ENCODE measurements at regions of chr10 and their contacts with region 1.

Region 1: GRCh38 chr10:71771821-71772617 is 1.3 kb downstream of the VSIR start:
- DNase-seq: no peak
- ATAC-seq: no peak
- H3K4me3 Mint-ChIP-seq: 0 out of 2 replicates have a peak overlapping the region, but pooled peaks have one; percentile 66
- H3K27ac Mint-ChIP-seq: no peak overlapping the region
- H3K4me1 Mint-ChIP-seq: peaks cover 6% of the 10 kb centered on the region
- H3K27me3 Mint-ChIP-seq: peaks cover 29% of the 10 kb centered on the region
- CTCF ChIP-seq: no peak

Region 2: DNA sequence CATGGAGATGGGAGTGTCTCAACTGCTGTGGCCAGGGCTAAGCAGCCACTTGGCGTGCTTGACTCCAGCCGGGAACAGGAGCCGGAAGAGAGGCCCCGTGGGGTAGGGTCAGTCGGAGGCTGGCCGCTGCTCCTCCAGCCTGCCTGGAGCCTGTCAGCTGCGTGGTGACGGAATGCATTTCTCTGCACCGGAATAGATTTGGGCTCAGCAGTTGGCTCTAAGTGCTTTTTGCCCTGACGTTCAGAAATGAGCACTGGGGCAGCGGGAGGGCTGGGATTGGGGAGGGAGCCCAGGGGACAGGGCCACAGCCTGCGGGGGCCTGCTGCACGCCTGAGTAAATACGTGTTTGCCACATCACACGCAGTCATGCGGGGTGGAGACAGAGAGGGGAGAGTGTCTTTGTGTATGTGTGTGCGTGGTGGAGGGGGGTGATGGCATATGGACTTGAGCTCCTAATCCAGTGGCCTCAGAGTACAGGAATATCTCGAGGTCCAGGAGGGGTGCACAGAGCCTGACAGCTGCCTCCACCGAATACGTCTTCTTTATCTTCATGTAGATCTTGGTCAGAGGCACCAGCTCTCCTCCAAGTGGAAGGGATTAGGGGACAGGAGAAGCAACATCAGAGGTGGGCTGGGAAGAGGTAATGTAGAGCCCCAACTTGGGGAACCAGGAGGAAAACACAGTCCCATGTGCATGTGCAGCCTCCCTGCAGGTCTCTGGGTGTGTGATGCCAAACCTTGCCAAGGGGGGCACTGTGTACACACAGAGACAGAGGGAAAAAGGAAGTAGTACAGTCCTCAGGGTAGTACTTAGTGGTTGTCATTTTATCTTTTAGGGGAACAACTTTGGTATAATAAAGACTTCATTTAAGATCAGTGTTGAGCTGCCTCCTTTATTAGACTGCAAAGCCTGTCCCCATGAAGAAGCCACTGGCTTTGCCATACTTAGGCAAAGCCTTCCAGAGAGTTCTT is 223.9 kb before region 1 on chr10:
- CTCF ChIA-PET with region 1: no interaction called
- POLR2A ChIA-PET with region 1: no interaction called
- DNase-seq: peak; percentile 52
- ATAC-seq: peak; percentile 59
- H3K4me3 Mint-ChIP-seq: no peak overlapping the region
- H3K27ac Mint-ChIP-seq: no peak overlapping the region
- H3K4me1 Mint-ChIP-seq: peaks cover 60% of the 10 kb centered on the region
- H3K27me3 Mint-ChIP-seq: no peaks in the 10 kb centered on the region
- CTCF ChIP-seq: no peak; the same call in 1 of the 2 replicates

Region 3: GRCh38 chr10:71666639-71667386 is 105.2 kb before region 1 on chr10:
- CTCF ChIA-PET with region 1: no interaction called
- POLR2A ChIA-PET with region 1: no interaction called
- DNase-seq: no peak
- ATAC-seq: no peak
- H3K4me3 Mint-ChIP-seq: no peak overlapping the region
- H3K27ac Mint-ChIP-seq: no peak overlapping the region
- H3K4me1 Mint-ChIP-seq: peaks cover 37% of the 10 kb centered on the region
- H3K27me3 Mint-ChIP-seq: peaks cover 14% of the 10 kb centered on the region; the same call in 1 of the 2 replicates
- CTCF ChIP-seq: no peak

Region 4: DNA sequence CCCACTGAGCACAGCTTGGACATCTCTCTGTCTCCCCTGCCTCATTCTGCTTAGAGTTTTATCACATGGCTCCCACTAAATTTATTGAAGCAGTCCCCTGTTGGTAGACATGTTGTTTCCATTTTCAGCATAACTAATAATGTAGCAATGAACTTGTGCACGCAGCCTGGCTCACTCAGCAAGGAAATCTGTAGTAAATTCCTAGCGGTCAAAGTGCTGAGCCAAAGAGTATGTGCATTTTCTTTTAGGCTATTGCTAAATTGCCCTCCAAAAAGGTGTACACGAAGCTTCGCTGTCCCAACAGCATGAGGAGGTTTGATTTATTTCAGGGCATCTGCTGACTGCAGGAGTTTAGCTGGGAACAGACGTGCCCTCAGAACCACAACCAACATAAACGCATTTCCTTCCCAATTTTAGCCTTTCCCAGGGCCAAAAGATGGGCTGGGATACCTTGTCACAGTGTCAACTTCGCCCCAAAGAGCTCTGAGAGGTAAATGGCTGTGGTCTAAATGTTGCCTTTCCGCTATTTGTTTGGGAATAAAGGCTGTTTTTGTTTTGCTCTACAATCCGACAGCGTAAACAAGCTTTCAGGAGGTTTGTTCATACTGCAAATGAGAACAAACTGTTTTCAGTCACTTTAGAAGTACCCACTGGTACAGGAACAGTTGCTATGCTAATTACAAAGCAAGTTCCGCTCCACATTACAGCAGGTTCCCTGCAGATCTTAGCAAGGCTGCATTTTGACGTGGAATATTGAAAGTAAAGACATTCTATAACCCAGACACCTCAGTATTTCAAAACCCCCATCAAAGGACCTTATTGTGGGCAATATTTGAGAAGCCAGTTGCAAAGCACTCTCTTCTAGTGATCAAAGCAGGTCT is 15.5 kb before region 1 on chr10:
- CTCF ChIA-PET with region 1: interaction called, 22 read pairs
- POLR2A ChIA-PET with region 1: no interaction called
- DNase-seq: no peak
- ATAC-seq: no peak
- H3K4me3 Mint-ChIP-seq: no peak overlapping the region
- H3K27ac Mint-ChIP-seq: no peak overlapping the region
- H3K4me1 Mint-ChIP-seq: peaks cover 18% of the 10 kb centered on the region
- H3K27me3 Mint-ChIP-seq: no peaks in the 10 kb centered on the region
- CTCF ChIP-seq: no peak

Region 5: DNA sequence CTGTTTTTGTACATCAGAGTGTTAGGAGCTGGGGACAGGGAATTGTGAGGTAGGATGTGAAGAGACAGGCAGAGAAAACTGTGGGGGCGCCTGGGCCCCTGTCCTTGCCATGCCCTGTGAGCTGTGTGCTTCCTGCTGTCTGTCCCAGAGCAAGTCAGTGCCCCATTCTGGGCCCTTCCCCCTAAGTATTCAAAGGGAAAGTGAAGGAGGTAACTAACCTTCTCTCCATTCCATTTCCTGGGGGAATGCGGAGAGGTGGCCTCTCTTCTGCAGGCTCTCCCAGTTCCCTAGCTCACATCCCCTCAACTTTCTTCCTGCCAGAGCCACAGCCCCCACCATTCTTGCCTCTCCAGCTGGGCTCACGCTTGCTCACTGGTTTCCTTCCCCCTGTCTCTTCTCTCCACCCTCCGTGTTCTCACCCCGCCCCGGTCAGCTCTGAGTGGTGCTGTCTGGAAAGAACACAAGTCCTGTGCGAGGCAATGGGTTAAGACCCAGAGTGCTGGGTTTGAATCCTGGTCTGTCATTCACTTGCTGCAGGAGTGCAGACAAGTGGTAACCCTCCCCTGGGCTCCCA is 11.0 kb after region 1 on chr10:
- CTCF ChIA-PET with region 1: interaction called, 22 read pairs
- POLR2A ChIA-PET with region 1: no interaction called
- DNase-seq: no peak
- ATAC-seq: peak; percentile 71
- H3K4me3 Mint-ChIP-seq: no peak overlapping the region
- H3K27ac Mint-ChIP-seq: no peak overlapping the region
- H3K4me1 Mint-ChIP-seq: peaks cover 19% of the 10 kb centered on the region
- H3K27me3 Mint-ChIP-seq: no peaks in the 10 kb centered on the region
- CTCF ChIP-seq: no peak

Region 6: DNA sequence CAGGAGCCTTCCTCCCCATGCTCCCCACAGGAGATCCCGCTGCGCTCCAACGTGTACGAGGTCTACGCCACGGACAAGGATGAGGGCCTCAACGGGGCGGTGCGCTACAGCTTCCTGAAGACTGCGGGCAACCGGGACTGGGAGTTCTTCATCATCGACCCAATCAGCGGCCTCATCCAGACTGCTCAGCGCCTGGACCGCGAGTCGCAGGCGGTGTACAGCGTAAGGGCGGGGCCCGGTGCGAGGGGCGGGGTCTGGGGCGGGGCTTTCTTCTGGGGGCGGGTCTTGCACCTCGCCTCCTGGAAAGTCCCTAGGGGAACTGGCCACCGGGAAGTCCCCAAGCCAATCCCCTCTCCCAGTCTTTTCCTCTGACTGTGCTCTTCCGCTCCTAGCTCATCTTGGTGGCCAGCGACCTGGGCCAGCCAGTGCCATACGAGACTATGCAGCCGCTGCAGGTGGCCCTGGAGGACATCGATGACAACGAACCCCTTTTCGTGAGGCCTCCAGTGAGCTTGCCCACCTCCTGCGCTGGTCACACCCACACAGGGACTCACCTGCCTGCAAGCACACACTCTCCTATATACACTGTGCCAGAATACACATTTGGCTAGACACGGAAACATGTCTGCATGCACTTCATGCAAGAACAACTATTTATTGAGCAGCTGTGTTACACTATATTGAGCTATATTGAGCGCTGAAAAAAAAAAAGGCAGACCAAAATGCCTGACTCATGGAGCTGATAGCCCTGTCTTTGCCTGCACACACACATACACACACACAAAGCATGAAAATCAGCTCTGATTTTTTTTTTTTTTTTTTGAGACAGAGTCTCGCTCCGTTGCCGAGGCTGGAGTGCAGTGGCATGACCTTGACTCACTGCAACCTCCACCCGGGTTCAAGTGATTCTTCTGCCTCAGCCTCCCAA is 34.0 kb after region 1 on chr10:
- CTCF ChIA-PET with region 1: interaction called, 21 read pairs
- POLR2A ChIA-PET with region 1: no interaction called
- DNase-seq: peak; percentile 71
- ATAC-seq: peak; percentile 96
- H3K4me3 Mint-ChIP-seq: peak overlapping the region; percentile 60
- H3K27ac Mint-ChIP-seq: no peak overlapping the region
- H3K4me1 Mint-ChIP-seq: peaks cover 3% of the 10 kb centered on the region
- H3K27me3 Mint-ChIP-seq: peaks cover 18% of the 10 kb centered on the region
- CTCF ChIP-seq: no peak

Region 7: DNA sequence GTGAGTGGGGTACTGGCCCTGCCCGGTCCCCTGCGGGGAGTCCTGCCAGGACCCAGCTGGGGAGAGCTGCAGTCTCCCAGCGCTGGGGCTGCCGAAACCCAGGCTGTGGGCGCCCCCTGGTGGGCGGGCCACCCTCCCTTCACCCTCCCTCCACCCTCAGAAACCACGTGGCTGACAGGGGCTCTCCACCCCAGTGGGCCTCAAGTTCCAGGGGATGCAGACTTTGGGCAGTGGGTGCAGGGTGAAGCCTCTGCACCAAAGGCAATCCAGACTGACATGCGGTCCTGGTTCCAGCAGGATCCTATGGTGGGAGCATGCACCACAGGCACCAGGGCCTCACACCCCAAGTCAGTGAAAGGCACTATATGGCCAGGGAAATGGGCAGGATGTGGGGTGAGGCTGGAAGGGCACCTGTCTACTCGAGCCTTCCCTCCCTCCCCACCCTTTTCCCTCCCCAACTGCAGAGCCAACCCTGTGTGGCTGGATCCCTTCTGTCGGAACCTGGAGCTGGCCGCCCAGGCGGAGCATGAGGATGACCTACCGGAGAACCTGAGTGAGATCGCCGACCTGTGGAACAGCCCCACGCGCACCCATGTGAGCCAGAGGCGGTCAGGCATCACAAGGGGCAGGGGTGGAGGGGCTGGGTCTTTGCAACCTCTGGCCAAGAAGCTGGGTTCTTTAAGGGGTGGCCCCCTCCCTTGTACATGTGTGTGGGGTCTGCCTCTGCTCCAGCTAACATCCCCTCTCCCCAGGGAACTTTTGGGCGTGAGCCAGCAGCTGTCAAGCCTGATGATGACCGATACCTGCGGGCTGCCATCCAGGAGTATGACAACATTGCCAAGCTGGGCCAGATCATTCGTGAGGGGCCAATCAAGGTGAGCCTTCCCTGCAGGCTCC is 40.2 kb after region 1 on chr10:
- CTCF ChIA-PET with region 1: interaction called, 18 read pairs
- POLR2A ChIA-PET with region 1: no interaction called
- DNase-seq: peak; percentile 74
- ATAC-seq: peak; percentile 76
- H3K4me3 Mint-ChIP-seq: no peak overlapping the region
- H3K27ac Mint-ChIP-seq: no peak overlapping the region
- H3K4me1 Mint-ChIP-seq: no peaks in the 10 kb centered on the region
- H3K27me3 Mint-ChIP-seq: no peaks in the 10 kb centered on the region
- CTCF ChIP-seq: peak; percentile 53

Region 8: GRCh38 chr10:71888623-71889387 is 116.8 kb after region 1 on chr10:
- CTCF ChIA-PET with region 1: no interaction called
- POLR2A ChIA-PET with region 1: no interaction called
- DNase-seq: peak; percentile 56
- ATAC-seq: peak; percentile 83
- H3K4me3 Mint-ChIP-seq: peak overlapping the region; percentile 73
- H3K27ac Mint-ChIP-seq: no peak overlapping the region
- H3K4me1 Mint-ChIP-seq: peaks cover 9% of the 10 kb centered on the region
- H3K27me3 Mint-ChIP-seq: peaks cover 44% of the 10 kb centered on the region
- CTCF ChIP-seq: no peak

Region 9: DNA sequence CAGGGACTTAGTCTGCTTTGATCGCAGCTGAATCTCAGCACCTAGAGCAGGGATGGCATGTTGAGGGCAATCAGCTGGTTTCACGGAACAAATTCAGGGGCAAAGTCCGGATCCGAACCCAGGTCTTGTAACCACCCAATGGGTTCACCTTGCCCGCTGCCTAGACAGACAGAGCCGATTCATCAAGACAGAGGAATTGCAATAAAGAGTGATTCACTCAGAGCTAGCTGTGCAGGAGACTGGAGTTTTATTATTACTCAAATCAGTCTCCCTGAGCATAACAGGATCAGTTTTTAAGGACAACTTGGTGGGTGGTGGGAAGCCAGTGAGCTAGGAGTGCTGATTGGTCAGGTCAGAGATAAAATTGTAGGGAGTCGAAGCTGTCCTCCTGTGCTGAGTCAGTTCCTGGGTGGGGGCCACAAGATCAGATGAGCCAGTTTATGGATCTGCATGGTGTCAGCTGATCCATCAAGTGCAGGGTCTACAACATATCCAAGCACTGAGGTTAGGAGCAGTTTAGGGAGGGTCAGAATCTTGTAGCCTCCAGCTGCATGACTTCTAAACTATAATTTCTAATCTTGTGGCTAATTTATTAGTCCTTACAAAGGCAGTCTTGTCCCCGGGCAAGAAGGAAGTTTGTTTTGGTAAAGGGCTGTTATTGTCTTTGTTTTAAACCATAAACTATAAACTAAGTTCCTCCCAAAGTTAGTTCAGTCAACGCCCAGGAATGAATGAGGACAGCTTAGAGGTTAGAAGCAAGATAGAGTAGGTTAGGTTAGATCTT is 148.7 kb after region 1 on chr10:
- CTCF ChIA-PET with region 1: no interaction called
- POLR2A ChIA-PET with region 1: no interaction called
- DNase-seq: no peak
- ATAC-seq: no peak
- H3K4me3 Mint-ChIP-seq: no peak overlapping the region
- H3K27ac Mint-ChIP-seq: no peak overlapping the region
- H3K4me1 Mint-ChIP-seq: peaks cover 4% of the 10 kb centered on the region; the same call in 1 of the 2 replicates
- H3K27me3 Mint-ChIP-seq: no peaks in the 10 kb centered on the region
- CTCF ChIP-seq: no peak